CD8-positive, alpha-beta T cell (primary cell): ENCODE measurements at regions of chrX and their contacts with region 1.

Region 1: GRCh38 chrX:150693775-150694574 is 779 bp downstream of the MTMR1 start:
- DNase-seq: peak; percentile 22 to 82 (median 66)
- ATAC-seq: peak; percentile 35
- H3K4me3 ChIP-seq: peak overlapping the region; percentile 54 to 82
- H3K4me3 Mint-ChIP-seq: peak overlapping the region; percentile 96
- H3K27ac ChIP-seq: peak overlapping the region; percentile 82 to 85
- H3K27ac Mint-ChIP-seq: peak overlapping the region; percentile 98
- H3K4me1 ChIP-seq: peaks cover 54% of the 10 kb centered on the region
- H3K4me1 Mint-ChIP-seq: peaks cover 68% of the 10 kb centered on the region
- H3K27me3 ChIP-seq: no peaks in the 10 kb centered on the region
- H3K27me3 Mint-ChIP-seq: no peaks in the 10 kb centered on the region
- CTCF ChIP-seq: no peak

Region 2: DNA sequence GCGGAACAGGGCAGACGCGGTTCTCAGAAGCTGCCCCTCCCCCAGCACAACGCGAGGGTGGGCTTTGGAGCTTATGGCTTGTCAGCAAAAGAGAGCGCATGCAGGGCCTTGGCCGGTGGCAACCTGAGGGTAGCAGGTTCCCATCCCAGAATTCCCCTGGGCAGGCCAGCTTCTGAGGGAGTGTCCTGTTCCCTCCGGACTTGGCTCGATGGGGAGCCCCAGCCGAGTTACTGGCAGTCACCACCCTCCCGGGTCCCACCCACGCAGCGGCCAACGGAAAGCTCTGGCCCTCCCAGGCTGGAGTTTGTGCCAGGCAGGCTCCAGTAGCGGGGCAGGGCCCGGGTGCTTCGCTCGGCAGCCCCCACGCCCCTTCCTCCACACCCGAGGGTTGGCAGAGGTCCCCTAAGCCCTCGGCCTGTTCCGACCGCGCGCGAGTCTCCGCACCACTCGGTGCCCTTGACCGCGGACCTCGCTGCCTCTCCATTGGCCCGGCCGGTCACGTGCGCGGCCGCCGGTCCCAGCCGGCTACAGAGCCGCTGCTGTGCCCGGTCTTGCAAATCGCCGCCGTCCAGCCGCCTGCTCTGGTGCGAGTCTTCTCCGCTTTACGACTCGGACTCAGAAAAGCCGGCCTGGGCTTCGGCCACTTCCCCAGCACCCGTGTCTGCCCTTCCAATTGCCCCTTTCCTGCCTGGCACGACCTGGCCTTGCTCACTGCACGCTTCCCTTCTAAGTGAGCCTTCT is 146.4 kb before region 1 on chrX:
- CTCF ChIA-PET with region 1: no interaction called
- POLR2A ChIA-PET with region 1: no interaction called
- intact Hi-C with region 1: loop called in 1 of 2 experiments (anchors 5 kb)
- DNase-seq: peak in 2 of 9 experiments; percentile 25 to 29
- ATAC-seq: no peak
- H3K4me3 ChIP-seq: peak overlapping the region; percentile 28 to 33
- H3K4me3 Mint-ChIP-seq: peak overlapping the region; percentile 81
- H3K27ac ChIP-seq: no peak overlapping the region
- H3K27ac Mint-ChIP-seq: no peak overlapping the region
- H3K4me1 ChIP-seq: peaks cover 26% of the 10 kb centered on the region
- H3K4me1 Mint-ChIP-seq: peaks cover 18% of the 10 kb centered on the region
- H3K27me3 ChIP-seq: no peaks in the 10 kb centered on the region
- H3K27me3 Mint-ChIP-seq: no peaks in the 10 kb centered on the region
- CTCF ChIP-seq: no peak

Region 3: GRCh38 chrX:150575416-150575808 is 118.6 kb before region 1 on chrX:
- CTCF ChIA-PET with region 1: no interaction called
- POLR2A ChIA-PET with region 1: no interaction called
- intact Hi-C with region 1: loop called in 1 of 2 experiments (anchors 5 kb)
- DNase-seq: peak in 7 of 9 experiments; percentile 15 to 78 (median 56)
- ATAC-seq: peak; percentile 81
- H3K4me3 ChIP-seq: peak overlapping the region in 1 of 2 experiments; percentile 33
- H3K4me3 Mint-ChIP-seq: peak overlapping the region; percentile 74
- H3K27ac ChIP-seq: peak overlapping the region in 1 of 2 experiments; percentile 31
- H3K27ac Mint-ChIP-seq: peak overlapping the region; percentile 88
- H3K4me1 ChIP-seq: peaks cover 71% of the 10 kb centered on the region
- H3K4me1 Mint-ChIP-seq: peaks cover 81% of the 10 kb centered on the region
- H3K27me3 ChIP-seq: no peaks in the 10 kb centered on the region
- H3K27me3 Mint-ChIP-seq: no peaks in the 10 kb centered on the region
- CTCF ChIP-seq: no peak

Region 4: DNA sequence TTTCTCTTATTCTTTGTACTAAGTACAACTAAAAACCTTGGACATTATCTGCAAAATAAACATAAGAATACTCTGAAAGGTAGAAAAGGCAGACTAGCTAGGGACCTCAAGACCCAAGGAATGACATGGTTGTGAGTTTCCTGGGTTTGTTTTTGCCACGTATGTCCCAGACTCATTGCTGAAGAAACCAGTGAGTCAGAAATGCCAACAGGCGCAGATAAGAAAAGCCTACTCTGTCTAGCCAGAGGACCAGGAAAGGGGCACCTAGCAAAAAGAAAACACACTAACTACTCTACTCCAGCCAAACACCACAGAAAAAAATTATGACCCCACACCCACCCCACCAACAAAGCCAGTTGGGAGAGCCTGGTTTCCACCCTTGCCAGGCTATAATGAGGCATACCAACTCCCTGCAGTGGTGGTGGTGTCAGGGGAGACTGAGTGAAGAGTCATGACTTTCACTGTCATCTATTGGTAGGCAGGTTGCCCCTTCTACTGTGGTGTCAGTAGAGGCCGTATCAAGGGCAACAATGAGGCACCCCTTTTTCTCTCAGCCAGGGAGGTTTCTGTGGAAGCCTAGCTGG is 10.1 kb after region 1 on chrX:
- CTCF ChIA-PET with region 1: interaction called, 4 read pairs
- POLR2A ChIA-PET with region 1: interaction called, 3 read pairs
- intact Hi-C with region 1: loop called in 1 of 2 experiments (anchors 1 kb)
- DNase-seq: no peak
- ATAC-seq: no peak
- H3K4me3 ChIP-seq: no peak overlapping the region
- H3K4me3 Mint-ChIP-seq: no peak overlapping the region
- H3K27ac ChIP-seq: no peak overlapping the region
- H3K27ac Mint-ChIP-seq: peak overlapping the region; percentile 20
- H3K4me1 ChIP-seq: no peaks in the 10 kb centered on the region
- H3K4me1 Mint-ChIP-seq: peaks cover 51% of the 10 kb centered on the region
- H3K27me3 ChIP-seq: no peaks in the 10 kb centered on the region
- H3K27me3 Mint-ChIP-seq: no peaks in the 10 kb centered on the region
- CTCF ChIP-seq: no peak

Region 5: GRCh38 chrX:150898343-150899190 is 204.6 kb after region 1 on chrX and contains the start of gene CD99L2:
- CTCF ChIA-PET with region 1: no interaction called
- POLR2A ChIA-PET with region 1: no interaction called
- intact Hi-C with region 1: loop called (anchors 2 kb)
- DNase-seq: peak; percentile 83 to 93 (median 89)
- ATAC-seq: peak; percentile 92
- H3K4me3 ChIP-seq: peak within 1 kb of the TSS; percentile 76 to 77
- H3K4me3 Mint-ChIP-seq: peak within 1 kb of the TSS; percentile 91
- H3K27ac ChIP-seq: peak within 1 kb of the TSS; percentile 36 to 63
- H3K27ac Mint-ChIP-seq: peak within 1 kb of the TSS; percentile 67
- H3K4me1 ChIP-seq: peaks cover 6% of the 10 kb centered on the region
- H3K4me1 Mint-ChIP-seq: peaks cover 11% of the 10 kb centered on the region
- H3K27me3 ChIP-seq: no peaks in the 10 kb centered on the region
- H3K27me3 Mint-ChIP-seq: no peaks in the 10 kb centered on the region
- CTCF ChIP-seq: no peak
- total RNA-seq, gene CD99L2: 6.4 TPM